ENCODE measurements at regions of chr17 and their contacts with region 1.

Region 1: GRCh38 chr17:3197219-3197618 is at the start of gene OR1A2:
- DNase-seq: no peak
- ATAC-seq: no peak
- total RNA-seq, gene OR1A2: not detected

Region 2: DNA sequence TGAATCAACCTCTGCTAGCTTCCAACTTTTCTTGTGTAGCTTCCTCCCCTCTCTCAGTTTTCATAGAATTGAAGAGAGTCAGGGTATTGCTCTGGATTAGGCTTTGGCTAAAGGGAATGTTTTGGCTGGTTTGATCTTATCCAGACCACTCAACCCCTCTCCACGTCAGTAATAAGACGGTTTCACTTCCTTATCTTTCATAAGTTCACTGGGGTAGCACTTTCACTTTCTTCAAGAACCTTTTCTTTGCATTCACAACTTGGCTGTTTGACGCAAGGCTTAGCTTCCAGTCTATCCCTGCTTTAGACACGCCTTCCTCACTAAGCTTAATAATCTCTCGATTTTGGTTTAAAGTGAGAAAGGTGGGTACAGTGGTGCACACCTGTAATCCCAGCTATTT is 29.6 kb before region 1 on chr17:
- intact Hi-C with region 1: loop called (anchors 2 kb)
- DNase-seq: no peak
- ATAC-seq: no peak